IMR-90 (cell line): ENCODE measurements at regions of chr2 and their contacts with region 1.

Region 1: DNA sequence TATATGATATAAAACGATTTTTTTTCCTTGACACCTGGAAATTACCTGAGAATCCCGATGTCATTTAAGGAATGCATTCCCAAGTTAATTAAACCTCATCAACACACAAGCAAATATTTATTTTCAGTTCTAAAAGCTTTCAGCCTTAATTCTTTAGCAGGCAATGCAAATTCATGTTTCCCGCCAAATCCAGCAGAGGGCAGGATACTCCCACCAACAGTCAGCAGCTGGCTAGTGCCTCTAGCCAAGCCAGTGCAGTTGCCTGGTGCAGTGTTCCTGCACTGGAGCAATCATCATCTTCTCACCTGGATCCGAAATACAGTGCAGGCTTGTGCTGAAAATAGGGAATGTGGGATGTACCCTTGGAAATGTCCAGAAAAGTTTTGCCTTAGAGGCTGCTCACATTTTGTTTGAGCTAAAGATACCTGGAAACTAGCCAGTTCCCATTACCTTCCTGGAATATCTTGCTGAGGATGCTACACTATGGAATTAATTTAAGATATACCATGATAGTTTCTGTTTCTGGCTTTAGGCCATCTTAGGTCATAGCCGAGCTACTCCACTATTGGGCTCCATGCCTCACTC is 48.4 kb upstream of the CYTIP start:
- DNase-seq: peak; percentile 59
- ATAC-seq: peak; percentile 93
- H3K4me3 ChIP-seq: no peak overlapping the region
- H3K27ac ChIP-seq: no peak overlapping the region
- H3K4me1 ChIP-seq: no peaks in the 10 kb centered on the region
- H3K27me3 ChIP-seq: peaks cover 2% of the 10 kb centered on the region
- CTCF ChIP-seq: peak; percentile 69
- POLR2A ChIP-seq: no peak
- RAD21 ChIP-seq: peak; percentile 69

Region 2: GRCh38 chr2:156803967-156804366 is 688.3 kb before region 1 on chr2:
- CTCF ChIA-PET with region 1: no interaction called
- POLR2A ChIA-PET with region 1: no interaction called
- dilution Hi-C with region 1: no loop called
- in situ Hi-C with region 1: no loop called
- intact Hi-C with region 1: no loop called
- DNase-seq: no peak
- ATAC-seq: no peak
- H3K4me3 ChIP-seq: no peak overlapping the region
- H3K27ac ChIP-seq: no peak overlapping the region
- H3K4me1 ChIP-seq: no peaks in the 10 kb centered on the region
- H3K27me3 ChIP-seq: no peaks in the 10 kb centered on the region
- CTCF ChIP-seq: no peak
- POLR2A ChIP-seq: no peak
- RAD21 ChIP-seq: no peak

Region 3: DNA sequence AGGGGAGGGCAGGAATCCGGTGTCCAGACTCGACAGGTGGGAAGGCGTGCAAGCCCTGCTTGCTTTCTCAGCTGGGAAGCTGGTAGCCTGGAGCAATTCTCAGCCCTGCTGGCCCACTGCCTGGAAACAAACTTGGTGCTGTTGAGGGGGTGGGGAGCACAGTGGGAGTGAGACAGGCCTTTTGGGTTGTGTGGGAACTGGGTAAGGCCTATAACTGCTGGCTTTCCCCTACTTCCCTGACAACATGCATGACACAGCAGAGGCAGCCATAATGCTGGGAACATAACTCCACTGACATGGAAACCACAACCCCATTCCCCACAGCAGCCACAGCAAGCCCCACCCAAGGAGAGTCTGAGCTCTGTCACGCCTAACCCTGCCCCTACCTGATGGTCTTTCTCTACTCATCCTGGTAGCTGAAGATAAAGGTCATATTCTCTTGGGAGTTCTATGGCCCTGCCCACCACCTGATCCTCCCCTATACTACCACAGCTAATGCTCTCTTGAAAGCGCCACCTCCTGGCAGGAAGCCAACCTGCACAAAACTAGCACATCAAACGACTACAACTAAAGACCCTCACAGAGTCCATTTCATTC is 259.3 kb after region 1 on chr2:
- CTCF ChIA-PET with region 1: no interaction called
- POLR2A ChIA-PET with region 1: no interaction called
- dilution Hi-C with region 1: no loop called
- in situ Hi-C with region 1: loop called (anchors 25 kb)
- intact Hi-C with region 1: no loop called
- DNase-seq: peak; percentile 57
- ATAC-seq: no peak
- H3K4me3 ChIP-seq: no peak overlapping the region
- H3K27ac ChIP-seq: no peak overlapping the region
- H3K4me1 ChIP-seq: peaks cover 4% of the 10 kb centered on the region
- H3K27me3 ChIP-seq: no peaks in the 10 kb centered on the region
- CTCF ChIP-seq: no peak
- POLR2A ChIP-seq: no peak
- RAD21 ChIP-seq: no peak

Region 4: DNA sequence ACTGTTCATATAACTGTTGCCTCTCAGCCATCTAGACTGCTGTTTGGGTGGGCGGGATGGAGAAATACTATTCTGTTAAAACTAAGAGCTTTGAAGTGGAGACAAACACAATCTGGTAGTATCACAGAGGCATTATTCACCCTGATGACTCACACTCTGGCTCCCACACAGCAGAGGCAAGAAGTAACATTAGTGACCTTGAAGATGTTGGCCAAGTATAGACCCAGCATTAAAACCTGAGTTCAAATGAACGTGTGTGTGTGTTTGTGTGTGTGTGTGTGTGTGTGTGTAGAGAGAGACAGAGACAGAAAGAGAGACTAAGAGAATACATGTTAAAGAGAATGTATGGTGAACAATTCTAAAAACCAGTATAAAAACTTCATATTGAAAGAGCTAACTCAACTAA is 406.3 kb after region 1 on chr2:
- CTCF ChIA-PET with region 1: no interaction called
- POLR2A ChIA-PET with region 1: no interaction called
- dilution Hi-C with region 1: no loop called
- in situ Hi-C with region 1: no loop called
- intact Hi-C with region 1: loop called (anchors 10 kb)
- DNase-seq: peak; percentile 95
- ATAC-seq: peak; percentile 80
- H3K4me3 ChIP-seq: no peak overlapping the region
- H3K27ac ChIP-seq: no peak overlapping the region
- H3K4me1 ChIP-seq: peaks cover 3% of the 10 kb centered on the region
- H3K27me3 ChIP-seq: no peaks in the 10 kb centered on the region
- CTCF ChIP-seq: no peak
- POLR2A ChIP-seq: no peak
- RAD21 ChIP-seq: no peak